ENCODE measurements at regions of chr18 and their contacts with region 1.

Region 1: DNA sequence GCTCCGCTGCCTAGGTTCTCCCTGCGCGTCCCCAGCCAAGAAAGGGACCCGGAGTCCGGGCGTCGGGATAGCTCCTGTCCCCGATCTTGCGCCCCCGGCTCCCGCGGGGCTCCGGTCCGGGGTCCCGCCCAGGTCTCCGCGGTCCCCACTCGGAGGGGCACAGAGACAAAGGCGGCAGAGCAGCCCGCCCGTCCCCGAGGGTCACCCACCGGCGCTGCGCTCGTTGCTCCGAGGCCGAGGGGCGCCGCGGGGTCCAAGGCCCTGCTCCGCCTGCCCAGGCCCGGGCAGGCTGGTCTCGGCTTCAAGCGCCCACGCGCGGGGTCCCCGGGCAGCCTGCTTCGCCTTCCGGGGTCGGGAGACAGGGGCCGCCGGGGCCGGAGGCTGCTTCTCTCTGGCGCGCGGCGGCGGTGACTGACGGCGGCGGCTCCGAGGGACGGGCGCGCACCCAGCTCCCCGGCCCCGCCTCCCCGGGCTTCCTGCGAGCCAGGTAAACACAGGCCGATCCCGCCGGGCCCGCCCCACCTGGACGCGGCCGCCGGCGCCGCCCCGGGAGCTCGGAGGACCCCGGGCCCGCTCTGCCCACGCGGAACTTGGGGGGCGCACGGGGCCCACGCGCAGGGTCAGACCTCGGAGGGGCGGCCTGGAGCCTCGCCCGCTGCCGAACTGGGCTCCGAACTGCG is at the start of gene MBP:
- DNase-seq: peak; percentile 71
- H3K4me3 ChIP-seq: peak within 1 kb of the TSS; percentile 74 to 88 (median 76)
- H3K27ac ChIP-seq: peak within 1 kb of the TSS; percentile 95
- H3K4me1 ChIP-seq: peaks cover 36% of the 10 kb centered on the region
- H3K27me3 ChIP-seq: no peaks in the 10 kb centered on the region
- CTCF ChIP-seq: no peak
- total RNA-seq, gene MBP: 30.7 to 43.3 TPM

Region 2: GRCh38 chr18:77000527-77000926 is 132.0 kb before region 1 on chr18:
- CTCF ChIA-PET with region 1: no interaction called
- dilution Hi-C with region 1: no loop called
- in situ Hi-C with region 1: no loop called
- intact Hi-C with region 1: loop called (anchors 5 kb)
- DNase-seq: peak; percentile 17
- H3K4me3 ChIP-seq: no peak overlapping the region
- H3K27ac ChIP-seq: no peak overlapping the region
- H3K4me1 ChIP-seq: no peaks in the 10 kb centered on the region
- H3K27me3 ChIP-seq: no peaks in the 10 kb centered on the region
- CTCF ChIP-seq: peak; percentile 95 to 97

Region 3: DNA sequence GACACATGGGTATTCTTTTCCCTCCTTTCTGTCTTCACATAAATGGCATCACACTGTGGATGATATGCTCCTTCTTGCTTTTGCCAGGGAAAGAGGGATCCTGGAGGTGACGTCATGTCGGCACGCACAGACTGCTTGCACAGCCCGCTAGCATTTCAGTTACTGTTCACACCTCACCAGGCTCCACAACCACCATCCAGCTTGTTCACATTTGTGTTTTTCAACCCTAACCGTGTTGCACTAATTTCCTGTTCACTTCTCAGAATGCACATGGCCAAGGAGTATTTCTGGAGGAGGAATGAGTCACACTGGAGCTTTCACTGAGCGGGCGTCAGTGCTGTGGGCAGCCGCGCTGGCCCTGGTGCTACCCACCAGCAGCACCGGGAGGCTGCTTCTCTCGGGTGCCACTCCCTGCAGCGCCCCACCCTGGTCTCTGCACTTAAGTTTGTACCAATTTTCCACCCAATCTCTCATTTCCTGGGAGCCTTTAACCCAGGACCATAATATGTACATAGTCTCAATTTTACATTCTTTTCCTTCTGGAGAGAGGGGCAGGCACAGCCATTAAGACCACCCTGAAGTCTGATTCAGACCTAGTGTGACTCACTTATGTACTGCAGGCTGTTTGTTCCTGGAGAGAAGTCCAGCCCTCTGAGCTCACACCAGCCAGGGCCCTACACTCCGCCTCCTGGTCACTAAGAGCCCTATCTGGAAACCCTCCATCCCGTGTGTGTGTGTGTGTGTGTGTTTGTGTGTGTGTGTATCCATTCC is 65.0 kb before region 1 on chr18:
- CTCF ChIA-PET with region 1: no interaction called
- dilution Hi-C with region 1: no loop called
- in situ Hi-C with region 1: loop called in 1 of 2 experiments (anchors 10 kb)
- intact Hi-C with region 1: loop called (anchors 2 kb)
- DNase-seq: peak; percentile 89
- H3K4me3 ChIP-seq: no peak overlapping the region
- H3K27ac ChIP-seq: peak overlapping the region; percentile 81
- H3K4me1 ChIP-seq: peaks cover 78% of the 10 kb centered on the region
- H3K27me3 ChIP-seq: no peaks in the 10 kb centered on the region
- CTCF ChIP-seq: no peak

Region 4: GRCh38 chr18:77101410-77102258 is 30.9 kb before region 1 on chr18:
- CTCF ChIA-PET with region 1: no interaction called
- dilution Hi-C with region 1: no loop called
- in situ Hi-C with region 1: no loop called
- intact Hi-C with region 1: loop called (anchors 1 kb)
- DNase-seq: peak; percentile 98
- H3K4me3 ChIP-seq: peak overlapping the region; percentile 1 to 26 (median 1)
- H3K27ac ChIP-seq: peak overlapping the region; percentile 97
- H3K4me1 ChIP-seq: peaks cover 56% of the 10 kb centered on the region
- H3K27me3 ChIP-seq: no peaks in the 10 kb centered on the region
- CTCF ChIP-seq: no peak

Region 5: DNA sequence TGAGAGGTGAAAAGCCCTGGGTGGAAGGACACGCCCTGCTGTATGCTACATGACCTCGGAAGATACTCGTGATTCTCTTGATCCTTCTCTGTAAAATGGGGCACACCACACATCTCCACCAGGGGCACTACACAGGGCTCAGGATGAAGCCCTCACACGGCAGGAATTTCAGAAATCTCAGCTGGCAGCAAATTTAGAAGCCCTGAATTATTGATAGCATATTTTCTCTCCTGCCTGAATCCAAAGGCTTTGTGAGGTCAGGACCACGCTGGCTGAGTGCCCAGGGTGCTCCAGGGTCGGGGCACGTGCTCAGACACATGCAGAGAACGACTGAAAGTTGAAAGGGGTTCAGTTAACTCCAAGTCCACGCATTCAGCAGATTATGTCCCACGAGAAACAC is 75.0 kb after region 1 on chr18:
- CTCF ChIA-PET with region 1: no interaction called
- dilution Hi-C with region 1: no loop called
- in situ Hi-C with region 1: no loop called
- intact Hi-C with region 1: loop called (anchors 5 kb)
- DNase-seq: peak; percentile 42
- H3K4me3 ChIP-seq: no peak overlapping the region
- H3K27ac ChIP-seq: no peak overlapping the region
- H3K4me1 ChIP-seq: no peaks in the 10 kb centered on the region
- H3K27me3 ChIP-seq: no peaks in the 10 kb centered on the region
- CTCF ChIP-seq: peak; percentile 67 to 78

Region 6: GRCh38 chr18:77329651-77330050 is 197.1 kb after region 1 on chr18:
- CTCF ChIA-PET with region 1: no interaction called
- dilution Hi-C with region 1: no loop called
- in situ Hi-C with region 1: no loop called
- intact Hi-C with region 1: no loop called
- DNase-seq: no peak
- H3K4me3 ChIP-seq: no peak overlapping the region
- H3K27ac ChIP-seq: no peak overlapping the region
- H3K4me1 ChIP-seq: no peaks in the 10 kb centered on the region
- H3K27me3 ChIP-seq: no peaks in the 10 kb centered on the region
- CTCF ChIP-seq: no peak

Region 7: DNA sequence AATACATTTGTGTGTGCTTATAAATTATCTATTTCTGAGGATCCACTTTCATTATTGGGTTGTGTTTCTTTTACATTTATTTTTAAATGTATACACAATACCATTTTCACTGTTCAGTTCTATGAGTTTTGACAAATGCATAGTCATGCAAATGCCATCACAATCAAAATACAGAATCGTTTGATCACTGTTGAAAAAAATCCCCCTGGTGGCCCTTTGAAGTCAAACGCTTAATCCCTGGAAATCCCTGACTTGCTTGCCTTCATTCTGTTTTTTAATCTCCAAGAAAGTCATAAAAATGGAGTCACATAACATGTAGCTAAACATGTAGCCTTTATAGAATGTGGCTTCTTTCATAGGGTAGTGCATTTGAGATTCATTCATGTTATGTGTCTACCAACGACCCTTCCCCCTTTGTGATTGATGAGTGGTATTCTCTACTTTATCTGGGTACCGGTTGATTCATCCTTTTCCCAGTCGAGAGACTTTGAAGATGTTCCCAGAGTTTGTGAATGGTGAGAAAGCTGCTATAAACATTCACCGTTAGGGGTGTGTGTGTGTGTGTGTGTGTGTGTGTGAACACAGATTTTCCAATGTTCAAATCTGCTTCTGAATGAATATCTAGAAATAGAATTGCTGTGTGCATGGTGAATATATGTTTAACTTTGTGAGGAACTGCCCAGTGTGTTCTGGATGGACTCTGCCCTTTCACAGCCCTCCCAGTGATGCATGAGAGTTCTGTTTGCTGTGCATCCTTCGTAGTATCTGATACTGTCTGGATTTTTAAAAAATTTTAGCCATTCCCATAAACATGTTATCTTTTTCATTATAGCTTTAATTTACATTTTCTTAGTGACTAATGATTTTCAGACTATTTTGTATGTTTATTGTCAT is 290.7 kb after region 1 on chr18:
- CTCF ChIA-PET with region 1: no interaction called
- dilution Hi-C with region 1: no loop called
- in situ Hi-C with region 1: no loop called
- intact Hi-C with region 1: no loop called
- DNase-seq: no peak
- H3K4me3 ChIP-seq: no peak overlapping the region
- H3K27ac ChIP-seq: no peak overlapping the region
- H3K4me1 ChIP-seq: no peaks in the 10 kb centered on the region
- H3K27me3 ChIP-seq: no peaks in the 10 kb centered on the region
- CTCF ChIP-seq: no peak

Measured in mammary epithelial cell (primary cell).